ENCODE measurements at regions of chr6 and their contacts with region 1.

Region 1: DNA sequence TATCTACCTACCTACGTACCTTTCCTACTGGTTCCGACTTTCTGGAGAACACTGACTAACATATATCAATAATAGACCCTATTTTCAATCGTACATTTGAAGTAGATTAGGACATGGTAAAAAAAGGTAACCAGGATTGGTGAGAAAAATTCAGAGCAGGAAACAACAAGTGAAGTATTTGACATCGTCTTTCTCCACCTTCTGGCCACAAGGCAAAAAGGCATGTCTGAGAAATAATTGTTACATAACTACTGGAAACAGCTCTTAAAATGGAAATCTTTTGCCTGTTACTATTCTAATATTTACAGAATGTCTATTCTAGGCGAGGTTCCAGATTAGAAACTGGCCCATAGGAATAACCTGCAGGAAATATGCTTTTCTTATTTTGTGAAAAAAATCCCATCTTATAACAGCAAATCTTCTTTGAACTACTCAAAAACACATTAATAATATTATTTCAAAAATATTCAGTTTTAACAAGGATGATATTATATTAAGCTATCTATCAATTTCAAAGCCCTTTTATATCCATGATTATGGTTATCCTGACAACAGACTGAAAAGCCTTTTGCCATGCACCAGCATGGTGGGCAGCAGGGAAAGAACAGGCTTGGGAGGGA is 80.8 kb downstream of the RCAN2 start:
- DNase-seq: no peak
- ATAC-seq: peak; percentile 49
- H3K4me3 ChIP-seq: no peak overlapping the region
- H3K27ac ChIP-seq: no peak overlapping the region
- H3K4me1 ChIP-seq: peaks cover 10 to 19% of the 10 kb centered on the region in 2 donors
- H3K27me3 ChIP-seq: no peaks in the 10 kb centered on the region

Region 2: GRCh38 chr6:46090115-46091079 is 320.0 kb before region 1 on chr6:
- intact Hi-C with region 1: loop called (anchors 5 kb)
- DNase-seq: peak; percentile 55 to 80
- ATAC-seq: peak; percentile 74
- H3K4me3 ChIP-seq: no peak overlapping the region
- H3K27ac ChIP-seq: no peak overlapping the region
- H3K4me1 ChIP-seq: no peaks in the 10 kb centered on the region
- H3K27me3 ChIP-seq: no peaks in the 10 kb centered on the region

Region 3: DNA sequence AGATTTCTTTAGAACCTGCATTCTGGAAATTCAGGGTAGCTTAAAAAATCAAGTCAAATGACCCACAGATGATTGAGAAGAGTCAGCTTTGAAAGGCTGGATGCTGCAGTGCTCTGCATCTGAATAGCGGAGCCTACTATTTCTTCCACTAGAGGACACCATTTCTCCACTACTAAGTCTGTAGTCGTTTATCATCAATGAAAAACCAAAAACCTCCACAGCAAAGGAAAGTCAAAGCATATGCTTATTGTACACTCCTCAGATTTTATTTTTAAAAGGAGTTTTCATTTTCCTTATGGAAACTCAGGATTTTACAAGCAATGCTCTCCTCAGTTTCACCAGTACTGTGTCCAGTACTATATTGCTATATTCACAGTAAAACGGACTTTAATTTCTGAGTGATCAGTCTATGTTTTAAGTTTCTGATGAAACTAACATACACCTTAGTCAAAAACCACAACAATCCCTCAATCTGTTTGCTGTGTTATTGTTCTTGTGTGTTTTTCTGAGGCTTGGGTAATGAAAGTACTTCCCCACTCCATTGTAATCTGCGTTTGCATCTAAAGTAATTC is 189.1 kb before region 1 on chr6:
- intact Hi-C with region 1: loop called in 1 of 2 experiments (anchors 2 kb)
- DNase-seq: no peak
- ATAC-seq: peak; percentile 70
- H3K4me3 ChIP-seq: no peak overlapping the region
- H3K27ac ChIP-seq: no peak overlapping the region
- H3K4me1 ChIP-seq: peaks cover 3 to 7% of the 10 kb centered on the region in 2 donors
- H3K27me3 ChIP-seq: no peaks in the 10 kb centered on the region

Region 4: DNA sequence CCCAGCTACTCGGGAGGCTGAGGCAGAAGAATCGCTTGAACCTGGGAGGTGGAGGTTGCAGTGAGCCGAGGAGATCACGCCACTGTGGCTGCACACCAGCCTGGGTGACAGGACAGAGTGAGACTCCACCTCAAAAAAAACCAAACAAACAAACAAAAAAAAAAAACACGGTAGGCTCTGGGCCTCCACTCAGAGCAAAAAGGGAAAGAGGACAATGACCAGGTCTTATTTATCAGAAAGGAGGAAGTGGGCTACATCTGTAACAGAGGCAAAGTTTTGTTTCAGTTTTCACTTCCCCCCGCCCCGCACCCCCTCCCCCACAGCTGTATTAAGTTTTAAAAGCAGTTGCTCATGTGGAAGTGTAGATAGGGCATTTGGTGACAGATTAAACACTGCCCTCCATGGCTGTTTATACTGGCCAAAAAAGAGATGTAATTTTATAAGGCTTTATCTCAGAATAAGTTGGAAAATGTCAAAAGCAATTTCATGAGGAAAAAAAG is 33.8 kb before region 1 on chr6:
- intact Hi-C with region 1: loop called in 1 of 2 experiments (anchors 2 kb)
- DNase-seq: no peak
- ATAC-seq: no peak
- H3K4me3 ChIP-seq: no peak overlapping the region
- H3K27ac ChIP-seq: peak overlapping the region in 1 of 2 donors; percentile 45
- H3K4me1 ChIP-seq: peaks cover 0 to 29% of the 10 kb centered on the region in 2 donors
- H3K27me3 ChIP-seq: no peaks in the 10 kb centered on the region

Measured in aorta (tissue), 5 donors.